OCI-LY7 (cell line): ENCODE measurements at regions of chr16 and their contacts with region 1.

Region 1: GRCh38 chr16:88785106-88785924 is at the start of gene PIEZO1:
- DNase-seq: peak; percentile 82
- H3K4me3 ChIP-seq: peak within 1 kb of the TSS; percentile 83
- H3K27ac ChIP-seq: peak within 1 kb of the TSS; percentile 57
- H3K4me1 ChIP-seq: peaks cover 51% of the 10 kb centered on the region
- CTCF ChIP-seq: peak; percentile 82
- total RNA-seq, gene PIEZO1: 123 and 144 TPM in 2 replicates

Region 2: DNA sequence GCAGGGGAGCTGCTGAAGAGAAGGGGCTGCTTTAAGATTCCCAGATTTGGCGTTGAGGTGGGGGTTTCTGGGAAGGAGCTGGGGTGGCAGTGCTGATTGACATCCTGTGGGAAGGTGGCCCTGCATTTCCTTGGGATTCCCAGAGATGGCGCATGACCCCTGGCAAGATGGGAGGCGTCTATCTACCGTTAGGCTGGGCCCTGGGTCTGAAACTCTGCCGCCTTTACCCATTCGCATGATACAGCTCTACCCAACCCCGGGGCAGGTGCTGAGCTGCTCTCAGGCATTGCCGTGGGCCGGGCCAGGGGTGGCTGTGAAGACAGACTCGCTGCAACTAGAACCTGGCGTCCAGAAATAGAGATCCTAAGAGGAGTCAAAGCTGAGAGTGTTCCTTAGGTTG is 112.5 kb before region 1 on chr16:
- CTCF ChIA-PET with region 1: no interaction called
- POLR2A ChIA-PET with region 1: no interaction called
- intact Hi-C with region 1: no loop called
- DNase-seq: no peak
- H3K4me3 ChIP-seq: no peak overlapping the region
- H3K27ac ChIP-seq: no peak overlapping the region
- H3K4me1 ChIP-seq: no peaks in the 10 kb centered on the region
- CTCF ChIP-seq: peak; percentile 42

Region 3: GRCh38 chr16:88706288-88706964 is 78.9 kb before region 1 on chr16 and contains the starts of genes CTU2 and RNF166:
- CTCF ChIA-PET with region 1: interaction called, 4 read pairs
- POLR2A ChIA-PET with region 1: no interaction called
- intact Hi-C with region 1: loop called (anchors 2 kb)
- DNase-seq: peak; percentile 91
- H3K4me3 ChIP-seq: peak within 1 kb of the TSS; percentile 89
- H3K27ac ChIP-seq: peak within 1 kb of the TSS; percentile 71
- H3K4me1 ChIP-seq: peaks cover 53% of the 10 kb centered on the region
- CTCF ChIP-seq: no peak
- total RNA-seq, gene CTU2: 18.5 and 21.9 TPM in 2 replicates
- total RNA-seq, gene RNF166: 39.2 and 52.4 TPM in 2 replicates

Region 4: DNA sequence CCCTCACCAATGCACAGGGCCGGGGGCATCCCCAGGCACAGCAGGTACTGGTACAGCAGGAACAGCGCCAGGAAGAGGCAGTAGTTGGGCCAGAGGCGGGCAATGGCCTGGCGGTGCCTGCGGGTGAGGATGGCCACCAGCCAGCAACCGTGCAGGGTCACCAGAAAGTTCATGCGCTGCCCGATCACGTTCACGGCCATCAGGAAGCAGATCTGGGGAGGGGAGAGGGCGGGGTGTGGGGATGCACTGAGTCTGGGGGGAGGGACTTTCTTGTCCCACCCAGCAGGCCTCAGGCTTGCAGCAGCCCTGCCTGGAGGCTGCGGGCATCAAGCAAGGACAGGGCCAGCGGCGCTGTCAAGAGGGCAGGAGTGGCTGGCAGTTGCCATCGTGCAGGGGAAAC is 53.6 kb before region 1 on chr16:
- CTCF ChIA-PET with region 1: no interaction called
- POLR2A ChIA-PET with region 1: no interaction called
- intact Hi-C with region 1: no loop called
- DNase-seq: no peak
- H3K4me3 ChIP-seq: no peak overlapping the region
- H3K27ac ChIP-seq: no peak overlapping the region
- H3K4me1 ChIP-seq: no peaks in the 10 kb centered on the region
- CTCF ChIP-seq: no peak

Region 5: GRCh38 chr16:88744577-88745521 is 40.5 kb before region 1 on chr16:
- CTCF ChIA-PET with region 1: interaction called, 3 read pairs
- POLR2A ChIA-PET with region 1: interaction called, 3 read pairs
- intact Hi-C with region 1: loop called (anchors 1 kb)
- DNase-seq: no peak
- H3K4me3 ChIP-seq: peak overlapping the region; percentile 14
- H3K27ac ChIP-seq: peak overlapping the region; percentile 80
- H3K4me1 ChIP-seq: peaks cover 49% of the 10 kb centered on the region
- CTCF ChIP-seq: no peak

Region 6: GRCh38 chr16:88830258-88830657 is 44.9 kb after region 1 on chr16:
- CTCF ChIA-PET with region 1: no interaction called
- POLR2A ChIA-PET with region 1: no interaction called
- intact Hi-C with region 1: no loop called
- DNase-seq: no peak
- H3K4me3 ChIP-seq: no peak overlapping the region
- H3K27ac ChIP-seq: no peak overlapping the region
- H3K4me1 ChIP-seq: no peaks in the 10 kb centered on the region
- CTCF ChIP-seq: no peak